GM23248 (cell line): ENCODE measurements at regions of chr14 and their contacts with region 1.

Region 1: DNA sequence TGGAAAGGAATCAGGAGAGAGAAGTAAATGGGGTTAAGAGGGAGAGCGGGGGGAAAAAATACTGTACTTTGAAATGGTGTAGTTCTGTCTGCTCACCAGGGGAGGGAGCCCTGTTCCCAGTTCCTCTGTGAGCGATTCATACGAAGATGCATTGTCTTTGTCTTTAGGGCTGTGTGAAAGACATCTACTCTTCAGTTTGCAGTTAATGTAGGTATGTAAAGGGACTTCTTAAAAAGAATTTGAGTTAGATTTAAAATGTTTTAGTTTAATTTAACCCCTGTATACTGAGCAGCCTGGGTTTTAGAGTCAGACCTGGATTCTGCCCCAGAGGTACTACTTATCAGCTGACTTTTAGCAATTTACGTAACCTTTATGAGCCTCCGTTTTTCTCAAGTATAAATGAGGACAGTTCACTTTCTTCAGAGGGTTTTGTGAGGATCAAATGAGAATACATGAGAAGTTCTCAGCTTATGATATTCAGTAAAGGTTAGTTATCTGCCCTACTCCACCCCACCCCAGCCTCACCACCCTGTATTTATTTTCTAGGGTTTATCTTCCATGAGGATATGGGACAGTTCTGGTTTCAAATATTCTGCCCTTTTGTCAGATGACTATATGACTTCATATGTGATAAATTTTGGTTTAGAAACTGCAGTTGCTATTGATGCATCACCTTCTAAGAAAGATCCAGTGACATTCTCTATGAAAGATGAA is 82.5 kb upstream of the EVL start:
- DNase-seq: peak; percentile 77
- H3K4me3 ChIP-seq: no peak overlapping the region
- H3K27ac ChIP-seq: no peak overlapping the region
- H3K4me1 ChIP-seq: peaks cover 19% of the 10 kb centered on the region
- H3K27me3 ChIP-seq: no peaks in the 10 kb centered on the region

Region 2: DNA sequence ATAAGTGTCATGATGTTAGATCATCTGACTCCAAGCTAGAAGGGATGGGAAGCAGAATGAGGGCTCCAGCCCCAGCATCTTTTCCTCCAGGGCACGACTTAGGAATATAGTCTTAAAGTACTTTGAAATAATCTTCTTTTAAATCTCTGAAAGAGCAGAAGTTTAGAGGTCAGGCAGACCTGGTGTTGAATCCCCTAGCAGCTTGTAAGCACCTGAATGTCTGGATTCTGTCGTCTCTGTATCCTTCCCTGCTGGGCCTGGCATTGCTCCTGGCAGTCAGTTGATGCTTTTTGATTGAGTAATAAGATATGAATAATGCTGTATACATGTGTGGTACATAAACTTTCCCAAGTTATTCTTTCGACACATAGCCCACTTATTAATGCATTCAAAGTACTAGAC is 113.9 kb after region 1 on chr14:
- in situ Hi-C with region 1: loop called (anchors 10 kb)
- DNase-seq: peak; percentile 83
- H3K4me3 ChIP-seq: no peak overlapping the region
- H3K27ac ChIP-seq: peak overlapping the region; percentile 32
- H3K4me1 ChIP-seq: peaks cover 16% of the 10 kb centered on the region
- H3K27me3 ChIP-seq: no peaks in the 10 kb centered on the region

Region 3: DNA sequence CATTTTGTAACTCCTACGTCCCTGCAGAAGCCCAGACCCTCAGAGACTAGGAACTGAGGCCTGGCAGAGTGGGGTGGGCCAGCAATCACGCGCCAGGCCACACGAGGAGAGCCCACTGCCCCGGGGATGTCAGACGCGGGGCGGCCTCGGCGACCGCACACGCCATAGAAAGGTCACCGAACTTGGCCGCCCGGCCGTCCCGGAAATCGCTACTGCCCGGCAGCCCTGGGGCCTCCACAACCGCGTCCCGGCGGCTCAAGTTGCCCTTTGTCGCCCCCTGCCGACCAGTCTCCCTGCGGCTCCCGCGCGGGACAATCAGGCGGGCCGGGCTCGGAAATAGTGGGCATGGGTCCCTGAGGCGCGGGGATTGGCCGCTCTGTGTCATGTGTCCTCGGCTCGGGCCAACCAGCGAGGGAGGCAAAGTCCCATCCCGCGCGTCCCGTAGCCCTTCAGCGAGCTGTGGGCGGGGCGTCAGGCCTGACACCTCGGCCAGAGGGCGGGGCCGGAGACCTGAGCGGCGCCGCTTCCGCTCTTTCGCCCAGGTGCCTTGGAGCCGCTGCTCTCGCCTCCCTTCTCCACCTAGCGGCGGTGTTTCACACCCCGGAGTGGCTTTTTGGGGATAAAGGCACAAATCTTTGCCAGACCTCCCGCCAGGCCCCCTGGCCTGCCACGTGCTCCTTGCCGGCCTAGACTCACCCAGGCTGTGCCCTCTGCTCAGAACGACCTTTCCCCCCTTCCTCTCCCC is 210.2 kb after region 1 on chr14:
- in situ Hi-C with region 1: loop called (anchors 5 kb)
- DNase-seq: peak; percentile 99
- H3K4me3 ChIP-seq: peak overlapping the region; percentile 53
- H3K27ac ChIP-seq: peak overlapping the region; percentile 43; the same call in 1 of the 2 replicates
- H3K4me1 ChIP-seq: peaks cover 6% of the 10 kb centered on the region; the same call in 1 of the 2 replicates
- H3K27me3 ChIP-seq: no peaks in the 10 kb centered on the region